Mammary epithelial cell (primary cell): ENCODE measurements at regions of chr1 and their contacts with region 1.

Region 1: DNA sequence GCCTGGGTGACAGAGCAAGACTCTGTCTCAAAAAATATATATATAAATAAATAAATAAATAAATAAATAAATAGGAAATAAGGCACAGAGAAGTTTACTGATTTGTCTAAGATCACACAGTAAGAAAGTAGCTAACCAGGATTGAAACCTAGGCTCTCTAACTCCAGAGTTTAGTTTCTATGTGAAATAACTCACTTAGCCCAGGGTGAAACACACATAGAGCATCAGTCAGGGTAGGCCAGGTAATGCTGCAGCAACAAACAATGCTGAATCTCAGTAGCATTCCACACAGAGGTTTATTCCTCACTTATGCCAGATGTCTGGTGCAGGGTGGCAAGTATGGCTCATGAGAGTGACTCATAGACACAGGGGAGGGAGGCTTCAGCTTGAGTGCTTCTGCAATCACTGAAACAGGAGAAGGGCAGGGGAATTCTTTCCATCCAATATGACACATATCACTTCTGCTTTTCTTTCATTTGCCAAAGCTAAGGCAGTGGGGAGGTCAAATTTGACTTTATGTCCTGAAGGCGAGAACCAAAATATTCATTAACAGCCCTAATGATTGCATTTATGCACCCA is 37.1 kb upstream of the KANK4 start:
- DNase-seq: peak; percentile 93
- H3K4me3 ChIP-seq: no peak overlapping the region
- H3K27ac ChIP-seq: no peak overlapping the region
- H3K4me1 ChIP-seq: peaks cover 6% of the 10 kb centered on the region
- H3K27me3 ChIP-seq: no peaks in the 10 kb centered on the region
- CTCF ChIP-seq: no peak

Region 2: DNA sequence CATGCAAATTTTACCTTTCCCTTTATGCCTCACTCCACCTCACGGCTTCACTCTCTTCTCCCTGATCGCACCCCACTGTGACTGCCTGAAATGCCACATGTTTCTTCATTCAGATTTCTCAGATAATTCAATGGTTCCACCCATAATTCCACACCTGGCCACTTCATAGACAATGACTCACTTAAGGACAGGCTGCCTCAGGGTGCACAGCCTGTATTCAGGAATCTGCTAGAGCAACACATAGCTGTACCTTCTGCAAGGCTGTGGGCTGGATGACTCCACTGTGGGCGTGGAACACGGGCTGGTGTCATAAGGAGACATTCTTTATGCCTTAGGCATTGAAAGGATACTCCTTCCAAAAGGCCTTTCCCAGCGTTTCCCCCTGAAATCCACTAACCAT is 125.6 kb before region 1 on chr1:
- CTCF ChIA-PET with region 1: no interaction called
- dilution Hi-C with region 1: no loop called
- in situ Hi-C with region 1: no loop called
- intact Hi-C with region 1: no loop called
- DNase-seq: peak; percentile 99
- H3K4me3 ChIP-seq: no peak overlapping the region
- H3K27ac ChIP-seq: peak overlapping the region; percentile 82
- H3K4me1 ChIP-seq: peaks cover 53% of the 10 kb centered on the region
- H3K27me3 ChIP-seq: no peaks in the 10 kb centered on the region
- CTCF ChIP-seq: no peak

Region 3: DNA sequence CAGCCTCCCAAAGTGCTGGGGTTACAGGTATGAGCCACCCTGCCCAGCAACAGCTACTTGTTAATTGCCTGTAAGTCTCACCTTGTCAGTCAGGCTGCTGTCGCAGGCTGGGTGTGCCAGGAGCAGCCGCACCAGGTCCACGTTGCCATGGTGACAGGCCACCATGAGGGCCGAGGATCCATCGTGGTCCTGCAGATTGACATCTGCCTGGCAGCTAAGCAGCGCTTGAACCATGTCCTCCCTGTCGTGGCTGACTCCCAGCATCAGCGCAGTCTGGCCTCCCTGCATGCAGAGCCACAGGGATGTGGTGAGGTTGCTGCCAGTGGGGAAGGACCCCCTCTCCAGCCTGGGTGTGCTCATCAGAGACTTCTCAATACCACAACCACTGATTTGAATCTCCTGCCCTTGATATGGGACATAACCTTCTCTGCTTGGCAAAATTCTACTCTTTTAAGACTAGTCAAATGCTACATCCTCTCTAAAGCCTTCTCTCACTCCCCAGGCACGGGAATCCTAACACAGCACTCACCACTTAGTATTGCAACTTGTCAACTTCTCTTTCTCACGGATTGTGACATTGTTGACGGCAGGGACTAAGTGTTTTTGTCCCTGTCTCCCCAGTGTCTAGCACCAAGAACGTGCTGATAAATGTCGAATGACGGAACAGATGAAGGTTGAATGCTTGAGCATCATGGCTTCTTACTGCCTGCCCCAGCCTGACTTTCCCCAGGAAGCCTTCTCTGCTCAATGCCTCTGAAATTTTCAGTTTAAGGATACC is 108.8 kb before region 1 on chr1:
- CTCF ChIA-PET with region 1: no interaction called
- dilution Hi-C with region 1: loop called (anchors 5 kb)
- in situ Hi-C with region 1: no loop called
- intact Hi-C with region 1: no loop called
- DNase-seq: no peak
- H3K4me3 ChIP-seq: no peak overlapping the region
- H3K27ac ChIP-seq: no peak overlapping the region
- H3K4me1 ChIP-seq: peaks cover 5% of the 10 kb centered on the region
- H3K27me3 ChIP-seq: no peaks in the 10 kb centered on the region
- CTCF ChIP-seq: no peak

Region 4: DNA sequence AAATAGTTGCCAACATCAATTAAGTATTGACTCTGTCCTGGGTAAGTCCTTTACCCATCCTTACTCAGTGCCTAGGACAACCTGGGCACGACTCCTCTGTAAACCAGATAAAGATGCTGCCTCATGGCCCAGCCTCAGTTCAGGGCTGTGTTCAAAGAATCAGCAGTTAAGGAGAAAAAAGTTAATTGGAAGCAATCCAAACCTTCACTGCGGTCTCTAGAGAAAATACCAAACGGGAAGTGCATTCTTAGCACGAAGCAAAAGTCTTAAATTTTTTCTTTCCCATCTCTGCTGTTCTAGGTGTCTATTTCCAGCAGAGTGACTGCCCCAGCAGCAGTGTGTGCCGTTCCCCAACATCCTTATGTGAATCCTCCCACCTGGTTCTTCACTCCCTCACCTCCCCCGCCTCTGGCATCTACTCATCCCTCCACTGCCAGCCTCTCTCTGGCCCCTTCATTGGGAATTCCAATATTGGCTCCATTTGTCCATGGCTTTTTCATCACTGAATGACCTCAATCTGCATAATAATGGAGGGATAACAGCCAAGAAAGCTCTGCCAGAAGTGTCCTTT is 60.3 kb before region 1 on chr1:
- CTCF ChIA-PET with region 1: no interaction called
- dilution Hi-C with region 1: no loop called
- in situ Hi-C with region 1: no loop called
- intact Hi-C with region 1: loop called (anchors 2 kb)
- DNase-seq: peak; percentile 62
- H3K4me3 ChIP-seq: peak overlapping the region in 1 of 3 experiments; percentile 12
- H3K27ac ChIP-seq: no peak overlapping the region
- H3K4me1 ChIP-seq: peaks cover 27% of the 10 kb centered on the region
- H3K27me3 ChIP-seq: no peaks in the 10 kb centered on the region
- CTCF ChIP-seq: no peak

Region 5: GRCh38 chr1:62325081-62325480 is 31.3 kb before region 1 on chr1:
- CTCF ChIA-PET with region 1: no interaction called
- dilution Hi-C with region 1: no loop called
- in situ Hi-C with region 1: no loop called
- intact Hi-C with region 1: loop called (anchors 2 kb)
- DNase-seq: peak; percentile 94
- H3K4me3 ChIP-seq: peak overlapping the region in 1 of 3 experiments; percentile 29
- H3K27ac ChIP-seq: peak overlapping the region; percentile 86
- H3K4me1 ChIP-seq: peaks cover 32% of the 10 kb centered on the region
- H3K27me3 ChIP-seq: no peaks in the 10 kb centered on the region
- CTCF ChIP-seq: no peak

Region 6: GRCh38 chr1:62377043-62377562 is 20.8 kb after region 1 on chr1:
- CTCF ChIA-PET with region 1: no interaction called
- dilution Hi-C with region 1: no loop called
- in situ Hi-C with region 1: no loop called
- intact Hi-C with region 1: loop called (anchors 2 kb)
- DNase-seq: no peak
- H3K4me3 ChIP-seq: no peak overlapping the region
- H3K27ac ChIP-seq: no peak overlapping the region
- H3K4me1 ChIP-seq: peaks cover 5% of the 10 kb centered on the region
- H3K27me3 ChIP-seq: no peaks in the 10 kb centered on the region
- CTCF ChIP-seq: no peak

Region 7: GRCh38 chr1:62493656-62494055 is 137.3 kb after region 1 on chr1:
- CTCF ChIA-PET with region 1: no interaction called
- dilution Hi-C with region 1: no loop called
- in situ Hi-C with region 1: no loop called
- intact Hi-C with region 1: no loop called
- DNase-seq: peak; percentile 21
- H3K4me3 ChIP-seq: no peak overlapping the region
- H3K27ac ChIP-seq: no peak overlapping the region
- H3K4me1 ChIP-seq: no peaks in the 10 kb centered on the region
- H3K27me3 ChIP-seq: no peaks in the 10 kb centered on the region
- CTCF ChIP-seq: no peak